WTC11 (cell line): ENCODE measurements at regions of chr13 and their contacts with region 1.

Region 1: DNA sequence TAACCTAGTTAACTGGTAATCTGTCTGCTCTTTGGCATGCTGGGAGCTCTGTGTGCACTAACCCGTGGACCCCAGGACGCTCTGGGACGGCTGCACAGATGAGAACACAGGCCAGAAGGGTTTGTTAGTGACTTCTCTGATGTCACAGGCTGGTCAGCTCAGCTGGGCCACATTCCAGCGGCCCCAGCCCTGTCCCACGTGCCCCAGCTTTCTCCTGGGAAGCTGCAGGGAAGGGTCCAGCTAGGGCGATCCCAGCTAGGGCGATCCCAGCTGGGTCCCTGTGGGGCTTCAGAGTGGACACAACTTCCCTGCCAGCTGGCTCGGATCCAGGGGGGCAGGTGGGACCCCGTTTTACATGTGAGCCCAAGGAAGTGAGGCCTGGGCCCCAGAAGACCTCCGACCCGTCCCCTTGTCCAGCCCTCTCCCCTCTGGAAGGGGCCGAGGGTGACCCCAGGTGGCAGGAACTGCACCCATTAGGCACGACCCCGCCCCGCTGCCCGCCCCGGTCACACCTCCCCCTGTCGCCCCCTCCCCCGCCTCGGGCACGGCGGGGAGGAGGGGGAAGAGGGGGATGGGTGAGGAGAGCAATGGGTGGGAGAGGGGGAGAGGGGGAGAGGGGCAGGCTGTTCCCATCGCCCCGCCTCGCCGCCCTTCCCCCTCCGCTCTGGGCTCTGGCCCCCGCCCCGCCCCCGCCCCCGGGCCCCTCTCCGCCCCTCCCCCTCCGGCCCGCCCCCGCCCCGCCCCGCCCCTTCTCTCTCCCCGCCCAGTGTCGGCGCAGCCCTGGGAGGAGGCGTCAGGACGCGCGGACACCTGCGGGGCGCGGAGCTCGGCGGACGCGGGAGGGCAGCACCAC is 75.2 kb upstream of the MCF2L start:
- DNase-seq: peak; percentile 67
- ATAC-seq: peak; percentile 53
- H3K4me3 Mint-ChIP-seq: peak overlapping the region; percentile 64
- H3K27ac Mint-ChIP-seq: peak overlapping the region; percentile 86
- H3K4me1 Mint-ChIP-seq: peaks cover 44% of the 10 kb centered on the region
- H3K27me3 Mint-ChIP-seq: peaks cover 40% of the 10 kb centered on the region
- CTCF ChIP-seq: no peak

Region 2: DNA sequence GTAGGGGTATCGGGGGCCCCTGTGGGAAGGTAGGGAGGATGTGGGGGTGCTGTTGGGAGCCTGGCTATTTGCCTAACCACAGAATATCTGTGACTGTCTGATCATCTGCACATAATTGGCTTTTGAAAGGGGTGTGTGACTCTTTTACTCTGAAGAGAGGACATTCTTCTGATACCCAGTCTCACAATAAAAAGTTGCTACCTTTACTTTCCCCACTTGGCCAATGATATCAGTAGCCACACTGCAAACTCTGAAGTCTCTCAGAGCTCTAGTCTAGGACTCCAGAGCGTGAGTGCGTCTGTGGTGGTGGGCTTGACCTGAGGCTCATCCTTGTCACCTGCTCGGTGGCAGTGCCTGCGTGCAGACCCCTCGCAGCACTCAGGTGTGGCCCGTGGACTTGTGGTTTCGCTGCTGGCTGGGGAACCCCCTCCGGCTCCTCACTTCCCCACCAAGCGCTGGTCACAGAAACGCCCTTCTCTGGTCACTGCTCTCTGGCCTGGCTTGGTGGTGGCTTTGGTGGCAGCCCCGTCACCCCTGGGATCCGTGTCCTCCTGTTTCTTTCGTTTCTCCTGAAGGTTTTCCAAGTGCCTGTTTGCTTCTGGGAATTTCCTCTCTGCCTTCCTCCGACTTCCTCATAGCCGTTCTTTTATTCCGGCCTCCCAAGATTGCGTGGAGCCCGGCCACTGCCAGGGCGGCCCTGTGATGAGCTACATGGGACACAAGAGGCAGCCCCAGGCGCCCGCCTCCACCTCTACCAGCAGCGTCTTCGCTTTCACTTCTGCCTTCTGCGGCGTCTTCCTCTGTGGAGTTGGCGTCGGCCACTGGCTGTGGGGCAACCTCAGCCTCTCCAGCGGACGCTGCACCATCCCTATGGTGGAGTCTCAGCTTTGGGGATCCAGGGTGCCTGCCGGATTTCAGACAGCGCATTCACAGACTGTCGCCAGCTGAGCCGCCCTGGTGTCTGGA is 126.0 kb before region 1 on chr13:
- CTCF ChIA-PET with region 1: no interaction called
- POLR2A ChIA-PET with region 1: no interaction called
- DNase-seq: no peak
- ATAC-seq: no peak
- H3K4me3 Mint-ChIP-seq: no peak overlapping the region
- H3K27ac Mint-ChIP-seq: peak overlapping the region; percentile 86
- H3K4me1 Mint-ChIP-seq: peaks cover 67% of the 10 kb centered on the region
- H3K27me3 Mint-ChIP-seq: no peaks in the 10 kb centered on the region
- CTCF ChIP-seq: no peak

Region 3: DNA sequence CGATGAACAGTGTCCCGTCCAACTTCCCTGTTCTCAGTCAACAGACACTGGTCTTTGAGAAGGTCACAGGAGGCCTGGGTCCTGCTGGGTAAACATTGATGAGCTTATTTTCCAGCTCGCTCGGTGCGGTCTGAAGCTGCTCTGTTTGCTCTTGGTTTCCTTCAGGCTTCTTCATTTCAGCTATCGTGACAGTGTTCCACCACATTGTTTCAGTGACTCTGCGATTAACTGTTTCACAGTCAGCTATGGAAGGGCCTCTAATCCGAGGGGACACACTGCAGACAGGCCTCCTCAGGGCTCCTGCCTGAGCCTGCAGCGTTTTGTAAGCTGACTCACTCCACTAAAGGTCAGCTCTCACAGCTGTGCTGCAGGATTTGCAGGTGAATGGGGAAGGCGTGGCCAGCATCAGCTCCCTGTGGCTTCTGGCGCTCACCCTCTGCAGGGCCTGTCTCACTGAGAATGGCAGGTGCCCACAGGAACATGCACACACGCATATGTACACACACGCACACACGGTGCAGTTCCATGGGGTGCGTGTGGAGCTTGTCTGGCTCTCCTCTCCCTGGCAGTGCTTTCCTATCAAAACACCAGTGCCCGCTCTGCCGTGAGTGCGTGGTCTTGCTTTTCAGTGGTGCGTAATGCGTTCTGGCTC is 12.3 kb after region 1 on chr13:
- CTCF ChIA-PET with region 1: interaction called, 11 read pairs
- POLR2A ChIA-PET with region 1: interaction called, 4 read pairs
- DNase-seq: peak; percentile 76
- ATAC-seq: peak; percentile 90
- H3K4me3 Mint-ChIP-seq: 0 out of 2 replicates have a peak overlapping the region, but pooled peaks have one; percentile 7
- H3K27ac Mint-ChIP-seq: peak overlapping the region; percentile 97
- H3K4me1 Mint-ChIP-seq: peaks cover 75% of the 10 kb centered on the region
- H3K27me3 Mint-ChIP-seq: no peaks in the 10 kb centered on the region; the same call in 1 of the 2 replicates
- CTCF ChIP-seq: no peak

Region 4: DNA sequence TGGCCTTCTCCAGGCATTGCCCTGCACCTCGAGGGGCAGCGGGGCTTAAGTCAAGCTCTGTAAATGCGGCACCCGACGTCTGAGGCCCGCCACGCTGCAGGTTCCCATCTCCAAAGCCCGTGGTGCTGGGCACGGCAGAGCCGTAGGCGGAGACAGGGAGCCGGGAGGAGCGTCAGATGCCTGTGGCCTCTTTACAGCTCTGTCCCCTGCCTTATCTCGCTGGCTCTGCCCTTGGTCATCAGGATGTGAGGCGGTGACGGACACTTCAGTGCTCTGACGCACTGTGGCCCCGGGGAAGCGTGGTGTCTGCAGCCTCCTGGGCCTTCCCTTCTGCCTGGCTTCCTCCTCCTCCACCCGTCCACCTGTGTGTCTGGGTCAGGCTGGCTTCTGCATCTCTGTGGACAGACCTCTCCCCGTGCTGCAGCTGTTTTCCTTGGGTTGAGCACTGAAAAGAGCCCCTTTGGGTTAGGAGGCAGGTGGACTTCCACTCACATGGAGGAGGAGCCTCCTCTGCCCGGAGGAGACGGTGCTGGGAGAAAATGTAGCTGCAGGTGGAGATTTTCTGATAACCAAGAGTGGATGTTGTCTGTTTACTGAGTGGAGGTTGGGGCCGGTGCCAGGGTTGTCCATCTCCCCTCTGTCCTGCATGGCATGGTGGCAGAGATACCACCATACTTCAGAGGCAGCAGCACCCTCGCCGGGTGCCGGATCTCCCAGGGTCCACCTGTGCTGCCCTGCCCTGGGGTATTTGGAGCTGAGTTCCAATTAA is 89.8 kb after region 1 on chr13:
- CTCF ChIA-PET with region 1: no interaction called
- POLR2A ChIA-PET with region 1: no interaction called
- DNase-seq: no peak
- ATAC-seq: no peak; the same call in 1 of the 2 replicates
- H3K4me3 Mint-ChIP-seq: no peak overlapping the region
- H3K27ac Mint-ChIP-seq: 0 out of 2 replicates have a peak overlapping the region, but pooled peaks have one; percentile 60
- H3K4me1 Mint-ChIP-seq: peaks cover 4% of the 10 kb centered on the region
- H3K27me3 Mint-ChIP-seq: no peaks in the 10 kb centered on the region
- CTCF ChIP-seq: no peak